ENCODE measurements at regions of chr20 and their contacts with region 1.

Region 1: DNA sequence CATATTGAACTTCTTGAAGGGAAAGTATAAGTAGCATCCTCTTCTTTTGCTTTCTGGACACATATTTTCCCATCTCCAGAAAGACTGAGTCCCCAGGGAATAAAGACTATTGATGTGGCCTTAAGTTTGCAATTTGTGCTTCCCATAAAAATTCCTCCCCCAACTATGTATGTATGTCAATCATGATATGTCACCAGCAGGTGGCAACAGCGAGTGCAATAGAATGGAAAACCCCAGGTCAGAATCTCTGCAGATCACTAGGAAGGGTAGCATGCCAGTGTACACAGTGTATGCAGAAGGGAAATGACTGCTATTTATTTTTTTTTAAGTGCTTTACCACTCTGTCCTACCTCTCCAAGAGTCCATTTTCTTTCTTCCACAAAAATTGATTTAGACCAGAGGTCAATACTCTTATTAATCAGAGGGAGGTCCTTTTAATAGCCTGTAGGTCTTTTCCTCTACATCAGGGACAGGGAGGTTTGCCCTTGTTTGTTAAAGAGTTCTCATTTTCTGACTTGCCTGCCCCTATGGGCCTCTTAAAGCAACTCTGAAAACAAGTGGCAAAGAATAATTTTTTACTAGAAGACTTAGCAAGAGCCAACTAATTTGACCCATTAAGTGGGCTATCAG is 61.4 kb downstream of the BMP2 start:
- DNase-seq: peak; percentile 40
- H3K4me3 Mint-ChIP-seq: no peak overlapping the region
- H3K27ac Mint-ChIP-seq: no peak overlapping the region
- H3K4me1 Mint-ChIP-seq: no peaks in the 10 kb centered on the region
- H3K27me3 Mint-ChIP-seq: no peaks in the 10 kb centered on the region

Region 2: DNA sequence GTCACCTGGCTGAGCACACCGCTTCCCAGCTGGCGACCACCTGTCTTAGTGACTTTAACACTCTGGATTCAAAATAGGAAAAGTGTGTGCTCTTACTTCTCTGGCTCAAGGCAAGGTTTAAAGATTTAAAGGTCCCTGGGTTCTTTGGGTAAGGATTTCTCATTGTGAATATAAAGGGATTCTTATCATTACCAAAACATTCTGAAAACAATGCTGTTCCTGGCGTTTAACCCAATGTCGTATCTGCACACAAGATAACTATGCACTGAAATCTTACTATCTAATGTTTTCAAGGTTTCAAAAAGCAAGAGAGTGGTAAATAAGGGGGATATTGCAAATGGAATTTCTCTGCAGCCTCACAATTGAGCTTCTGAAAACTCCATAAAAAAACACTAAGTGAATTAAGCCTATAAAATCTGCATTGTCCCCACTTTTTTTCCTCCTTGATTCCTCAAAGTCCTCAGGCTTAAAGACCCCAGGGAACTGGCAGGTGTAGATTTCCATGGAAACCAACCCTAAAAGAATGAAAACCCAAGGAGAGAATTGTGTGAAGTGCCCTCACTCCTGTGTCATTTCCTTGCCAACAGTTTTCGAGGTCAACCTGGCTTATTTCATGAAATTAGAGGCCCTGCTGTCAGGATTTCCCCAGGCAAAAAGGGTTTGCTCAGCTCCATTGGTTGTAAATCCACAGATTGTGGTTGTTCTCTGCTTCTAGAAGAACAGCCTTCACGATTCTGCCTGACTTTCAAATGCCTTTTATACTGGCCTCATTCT is 17.5 kb before region 1 on chr20:
- CTCF ChIA-PET with region 1: no interaction called
- POLR2A ChIA-PET with region 1: no interaction called
- intact Hi-C with region 1: no loop called
- DNase-seq: no peak
- H3K4me3 Mint-ChIP-seq: no peak overlapping the region
- H3K27ac Mint-ChIP-seq: no peak overlapping the region
- H3K4me1 Mint-ChIP-seq: no peaks in the 10 kb centered on the region
- H3K27me3 Mint-ChIP-seq: peaks cover 2% of the 10 kb centered on the region

Region 3: GRCh38 chr20:7195704-7196103 is 366.8 kb after region 1 on chr20:
- CTCF ChIA-PET with region 1: no interaction called
- POLR2A ChIA-PET with region 1: no interaction called
- intact Hi-C with region 1: no loop called
- DNase-seq: no peak
- H3K4me3 Mint-ChIP-seq: no peak overlapping the region
- H3K27ac Mint-ChIP-seq: no peak overlapping the region
- H3K4me1 Mint-ChIP-seq: no peaks in the 10 kb centered on the region
- H3K27me3 Mint-ChIP-seq: no peaks in the 10 kb centered on the region

Region 4: GRCh38 chr20:7375905-7376304 is 547.0 kb after region 1 on chr20:
- CTCF ChIA-PET with region 1: no interaction called
- POLR2A ChIA-PET with region 1: no interaction called
- intact Hi-C with region 1: loop called (anchors 10 kb)
- DNase-seq: no peak
- H3K4me3 Mint-ChIP-seq: no peak overlapping the region
- H3K27ac Mint-ChIP-seq: no peak overlapping the region
- H3K4me1 Mint-ChIP-seq: no peaks in the 10 kb centered on the region
- H3K27me3 Mint-ChIP-seq: no peaks in the 10 kb centered on the region

Region 5: DNA sequence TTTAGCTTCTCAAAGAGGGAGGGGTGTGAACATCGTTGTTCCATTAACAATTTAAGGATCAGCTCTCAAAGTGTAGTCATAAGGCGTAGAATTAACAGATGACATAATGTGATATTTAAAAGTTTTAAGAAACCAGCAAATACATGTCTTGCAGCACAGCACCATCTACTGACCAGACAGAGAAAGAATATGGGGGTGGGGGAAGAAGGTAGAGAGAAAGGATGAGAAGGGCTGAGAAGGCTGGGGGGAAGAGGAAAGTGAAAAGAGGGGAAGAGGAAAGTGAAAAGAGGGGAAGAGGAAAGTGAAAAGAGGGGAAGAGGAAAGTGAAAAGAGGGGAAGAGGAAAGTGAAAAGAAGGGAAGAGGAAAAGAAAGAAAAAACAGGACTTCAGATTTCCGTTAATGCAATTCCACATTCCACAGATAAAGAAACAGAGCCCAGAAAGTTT is 1030.5 kb after region 1 on chr20:
- CTCF ChIA-PET with region 1: no interaction called
- POLR2A ChIA-PET with region 1: no interaction called
- intact Hi-C with region 1: loop called (anchors 2 kb)
- DNase-seq: peak; percentile 10
- H3K4me3 Mint-ChIP-seq: no peak overlapping the region
- H3K27ac Mint-ChIP-seq: no peak overlapping the region
- H3K4me1 Mint-ChIP-seq: no peaks in the 10 kb centered on the region
- H3K27me3 Mint-ChIP-seq: peaks cover 1% of the 10 kb centered on the region

Measured in activated CD4-positive, alpha-beta memory T cell treated with anti-CD3 and anti-CD28 coated beads for 36 hours (primary cell).